ENCODE measurements at regions of chr15 and their contacts with region 1.

Region 1: GRCh38 chr15:50390554-50391287 is 33.5 kb upstream of the USP8 start:
- DNase-seq: no peak
- ATAC-seq: peak; percentile 65
- H3K4me3 Mint-ChIP-seq: no peak overlapping the region
- H3K27ac Mint-ChIP-seq: peak overlapping the region; percentile 8
- H3K4me1 Mint-ChIP-seq: peaks cover 8% of the 10 kb centered on the region
- H3K27me3 Mint-ChIP-seq: no peaks in the 10 kb centered on the region
- CTCF ChIP-seq: no peak

Region 2: GRCh38 chr15:50219820-50220219 is 170.9 kb before region 1 on chr15:
- CTCF ChIA-PET with region 1: no interaction called
- POLR2A ChIA-PET with region 1: no interaction called
- intact Hi-C with region 1: no loop called
- DNase-seq: no peak
- ATAC-seq: no peak
- H3K4me3 Mint-ChIP-seq: no peak overlapping the region
- H3K27ac Mint-ChIP-seq: no peak overlapping the region
- H3K4me1 Mint-ChIP-seq: peaks cover 4% of the 10 kb centered on the region
- H3K27me3 Mint-ChIP-seq: no peaks in the 10 kb centered on the region
- CTCF ChIP-seq: no peak

Region 3: DNA sequence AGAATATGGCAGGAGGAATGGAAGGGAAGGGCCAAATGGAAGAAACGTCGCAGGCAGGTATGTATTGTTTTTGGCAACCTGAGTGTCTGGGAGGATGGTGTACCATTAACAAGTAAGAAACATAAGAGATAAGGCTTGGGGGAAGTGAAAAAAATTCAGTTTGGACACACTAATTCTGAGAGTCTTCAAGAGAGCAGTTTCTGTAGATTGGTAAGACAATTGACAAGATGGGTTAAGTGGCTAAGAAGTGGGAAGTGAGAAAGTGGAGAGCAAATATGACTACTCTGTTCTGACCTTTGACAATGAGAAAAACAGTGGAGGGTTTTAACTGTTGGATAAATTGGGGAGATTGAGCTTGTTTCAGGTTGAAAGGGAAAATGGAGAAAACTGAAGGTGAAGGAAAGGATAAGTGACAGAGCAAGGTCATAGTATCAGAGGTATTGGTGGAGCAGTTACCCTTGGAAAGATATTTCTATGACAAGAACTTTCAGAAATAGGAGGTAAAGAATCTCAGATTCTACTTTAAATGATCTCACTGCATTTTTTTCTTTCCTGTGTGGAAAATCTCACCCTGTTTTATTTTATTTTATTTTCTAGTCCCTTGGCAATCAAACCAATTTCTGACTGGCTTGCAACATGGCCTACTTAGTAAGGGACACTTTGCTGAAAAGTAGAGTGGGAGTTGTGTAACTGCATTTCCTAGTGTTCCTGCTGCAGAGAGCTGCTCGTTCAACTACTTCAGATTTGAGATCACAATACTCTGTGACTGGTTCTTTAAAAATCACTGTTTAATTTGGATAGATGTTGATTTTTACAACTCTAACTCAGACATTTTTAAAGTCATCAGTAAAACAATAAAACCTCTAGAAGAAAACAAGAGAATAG is 12.6 kb before region 1 on chr15:
- CTCF ChIA-PET with region 1: interaction called, 4 read pairs
- POLR2A ChIA-PET with region 1: interaction called, 3 read pairs
- intact Hi-C with region 1: loop called (anchors 1 kb)
- DNase-seq: no peak
- ATAC-seq: peak; percentile 87
- H3K4me3 Mint-ChIP-seq: peak overlapping the region; percentile 28
- H3K27ac Mint-ChIP-seq: peak overlapping the region; percentile 77
- H3K4me1 Mint-ChIP-seq: peaks cover 17% of the 10 kb centered on the region
- H3K27me3 Mint-ChIP-seq: no peaks in the 10 kb centered on the region
- CTCF ChIP-seq: no peak

Region 4: GRCh38 chr15:50415749-50416404 is 25.2 kb after region 1 on chr15:
- CTCF ChIA-PET with region 1: no interaction called
- POLR2A ChIA-PET with region 1: no interaction called
- intact Hi-C with region 1: no loop called
- DNase-seq: no peak
- ATAC-seq: no peak
- H3K4me3 Mint-ChIP-seq: no peak overlapping the region
- H3K27ac Mint-ChIP-seq: no peak overlapping the region
- H3K4me1 Mint-ChIP-seq: no peaks in the 10 kb centered on the region
- H3K27me3 Mint-ChIP-seq: no peaks in the 10 kb centered on the region
- CTCF ChIP-seq: no peak

Measured in activated B cell treated with CpG ODN at 0.5 μM for 24 hours (primary cell).